ENCODE measurements at regions of chr1 and their contacts with region 1.

Region 1: GRCh38 chr1:101288491-101288944 is 51.7 kb downstream of the S1PR1 start:
- DNase-seq: peak; percentile 62 to 80 (median 74)
- ATAC-seq: peak; percentile 85
- H3K4me3 ChIP-seq: no peak overlapping the region
- H3K27ac ChIP-seq: peak overlapping the region in 1 of 4 donors; percentile 13
- H3K4me1 ChIP-seq: no peaks in the 10 kb centered on the region
- H3K27me3 ChIP-seq: no peaks in the 10 kb centered on the region
- CTCF ChIP-seq: peak; percentile 58 to 99 (median 82)
- POLR2A ChIP-seq: no peak

Region 2: GRCh38 chr1:100921109-100921706 is 367.3 kb before region 1 on chr1:
- intact Hi-C with region 1: loop called (anchors 10 kb)
- DNase-seq: no peak
- ATAC-seq: no peak
- H3K4me3 ChIP-seq: no peak overlapping the region
- H3K27ac ChIP-seq: no peak overlapping the region
- H3K4me1 ChIP-seq: no peaks in the 10 kb centered on the region
- H3K27me3 ChIP-seq: no peaks in the 10 kb centered on the region
- CTCF ChIP-seq: peak; percentile 26 to 70 (median 64)
- POLR2A ChIP-seq: no peak

Measured in body of pancreas (tissue), 4 donors.